ENCODE measurements at regions of chr7 and their contacts with region 1.

Region 1: GRCh38 chr7:85887136-85887535 is 700.3 kb upstream of the SEMA3D start:
- DNase-seq: no peak
- H3K4me3 ChIP-seq: no peak overlapping the region
- H3K27ac ChIP-seq: no peak overlapping the region
- H3K4me1 ChIP-seq: no peaks in the 10 kb centered on the region
- H3K27me3 ChIP-seq: no peaks in the 10 kb centered on the region
- CTCF ChIP-seq: no peak

Region 2: DNA sequence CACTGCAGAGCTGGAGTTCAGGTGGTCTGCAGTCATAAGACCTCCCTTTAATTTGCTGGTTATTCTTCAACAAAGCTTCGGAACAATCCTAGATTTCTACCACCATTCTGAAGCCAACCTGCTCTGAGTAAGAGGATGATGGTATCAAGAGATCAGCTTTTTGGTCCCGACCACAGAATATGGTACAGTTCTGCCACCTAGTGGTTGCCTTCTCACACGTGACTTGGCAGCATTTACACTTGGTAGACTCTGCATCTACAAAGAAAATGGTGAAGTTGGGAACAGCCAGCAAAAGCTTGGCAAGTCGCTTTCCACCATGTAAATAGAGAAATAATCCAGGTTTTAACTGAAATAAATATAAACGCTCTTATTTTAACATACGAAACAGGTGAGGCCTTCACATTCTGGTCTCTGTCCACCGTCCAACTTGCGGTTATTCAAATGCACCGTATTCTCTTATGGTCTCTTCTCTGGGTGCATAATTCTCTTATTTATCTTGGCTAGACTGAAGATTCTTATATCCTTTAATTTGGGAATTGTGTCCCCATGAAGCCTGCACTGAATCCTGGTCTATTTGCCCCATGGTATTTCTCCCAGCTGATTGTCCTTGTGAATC is 582.7 kb after region 1 on chr7:
- intact Hi-C with region 1: loop called (anchors 5 kb)
- DNase-seq: peak; percentile 62
- H3K4me3 ChIP-seq: no peak overlapping the region
- H3K27ac ChIP-seq: no peak overlapping the region
- H3K4me1 ChIP-seq: no peaks in the 10 kb centered on the region
- H3K27me3 ChIP-seq: no peaks in the 10 kb centered on the region
- CTCF ChIP-seq: peak; percentile 56

Region 3: GRCh38 chr7:86904949-86905834 is 1018.1 kb after region 1 on chr7:
- intact Hi-C with region 1: loop called (anchors 5 kb)
- DNase-seq: peak; percentile 22
- H3K4me3 ChIP-seq: no peak overlapping the region
- H3K27ac ChIP-seq: no peak overlapping the region
- H3K4me1 ChIP-seq: no peaks in the 10 kb centered on the region
- H3K27me3 ChIP-seq: no peaks in the 10 kb centered on the region
- CTCF ChIP-seq: peak; percentile 59